Heart left ventricle (tissue), 16 donors: ENCODE measurements at regions of chr9 and their contacts with region 1.

Region 1: GRCh38 chr9:128593039-128593438 is 40.7 kb downstream of the SPTAN1 start:
- DNase-seq: no peak
- ATAC-seq: no peak
- H3K4me3 ChIP-seq: no peak overlapping the region
- H3K27ac ChIP-seq: no peak overlapping the region
- H3K4me1 ChIP-seq: no peaks in the 10 kb centered on the region
- H3K27me3 ChIP-seq: no peaks in the 10 kb centered on the region
- CTCF ChIP-seq: no peak
- POLR2A ChIP-seq: no peak

Region 2: DNA sequence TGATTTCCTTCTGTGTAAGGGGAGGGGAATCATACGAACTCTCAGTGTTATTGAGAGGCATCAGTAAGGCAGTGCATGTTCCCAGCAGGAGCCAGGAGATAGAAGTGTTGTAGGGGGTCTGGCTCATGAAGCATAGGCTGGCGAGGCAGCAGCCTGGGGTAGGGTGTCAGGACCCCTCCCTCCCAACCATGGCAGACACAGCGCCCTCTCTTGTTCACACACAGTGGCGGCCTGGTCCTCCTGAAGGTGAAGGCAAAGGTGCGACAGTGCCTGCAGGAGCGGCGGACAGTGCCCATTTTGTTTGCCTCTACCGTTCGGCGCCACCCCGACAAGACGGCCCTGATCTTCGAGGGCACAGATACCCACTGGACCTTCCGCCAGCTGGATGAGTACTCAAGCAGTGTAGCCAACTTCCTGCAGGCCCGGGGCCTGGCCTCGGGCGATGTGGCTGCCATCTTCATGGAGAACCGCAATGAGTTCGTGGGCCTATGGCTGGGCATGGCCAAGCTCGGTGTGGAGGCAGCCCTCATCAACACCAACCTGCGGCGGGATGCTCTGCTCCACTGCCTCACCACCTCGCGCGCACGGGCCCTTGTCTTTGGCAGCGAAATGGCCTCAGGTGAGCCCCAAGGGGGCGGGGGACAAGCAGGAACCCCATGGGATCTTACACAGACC is 248.0 kb before region 1 on chr9:
- intact Hi-C with region 1: no loop called
- DNase-seq: no peak
- ATAC-seq: no peak
- H3K4me3 ChIP-seq: no peak overlapping the region
- H3K27ac ChIP-seq: no peak overlapping the region
- H3K4me1 ChIP-seq: peaks cover 0 to 12% (median 9%) of the 10 kb centered on the region in 12 donors
- H3K27me3 ChIP-seq: no peaks in the 10 kb centered on the region
- CTCF ChIP-seq: no peak
- POLR2A ChIP-seq: no peak

Region 3: DNA sequence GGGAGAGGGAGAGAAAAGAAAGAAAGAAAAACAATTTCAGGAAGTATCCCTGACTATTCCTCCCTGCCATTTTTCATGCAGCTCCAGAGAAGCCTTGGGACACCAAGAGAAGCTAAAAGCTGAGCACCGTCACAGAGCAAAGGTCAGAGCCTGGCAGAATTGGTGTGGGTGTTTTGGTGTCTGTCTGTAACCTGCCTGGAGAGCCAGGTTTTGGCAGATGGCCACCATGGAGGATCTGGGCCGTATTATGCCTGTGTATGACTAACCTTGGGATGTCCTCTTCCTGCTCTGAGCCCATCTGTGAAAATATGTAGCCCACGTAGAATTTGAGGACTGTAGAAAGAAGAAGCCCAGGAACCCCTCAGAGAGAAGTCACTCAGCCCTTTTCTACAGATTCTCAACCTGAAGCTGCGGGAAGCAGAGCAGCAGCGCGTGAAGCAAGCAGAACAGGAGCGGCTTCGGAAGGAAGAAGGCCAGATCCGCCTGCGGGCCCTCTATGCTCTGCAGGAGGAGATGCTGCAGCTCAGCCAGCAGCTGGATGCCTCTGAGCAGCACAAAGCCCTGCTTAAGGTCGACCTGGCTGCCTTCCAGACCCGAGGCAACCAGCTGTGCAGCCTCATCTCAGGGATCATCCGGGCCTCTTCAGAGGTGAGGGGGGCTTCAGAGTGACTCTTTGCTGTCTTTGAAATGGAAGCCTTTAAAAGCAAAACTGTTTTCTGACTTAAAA is 69.7 kb before region 1 on chr9:
- intact Hi-C with region 1: loop called in 1 of 10 experiments (anchors 10 kb)
- DNase-seq: peak in 3 of 5 donors; percentile 22 to 57 (median 33)
- ATAC-seq: peak in 3 of 4 donors; percentile 45 to 53 (median 47)
- H3K4me3 ChIP-seq: no peak overlapping the region
- H3K27ac ChIP-seq: peak overlapping the region in 1 of 12 donors; percentile 14
- H3K4me1 ChIP-seq: peaks cover 0 to 9% (median 5%) of the 10 kb centered on the region in 12 donors
- H3K27me3 ChIP-seq: no peaks in the 10 kb centered on the region
- CTCF ChIP-seq: no peak
- POLR2A ChIP-seq: no peak

Region 4: GRCh38 chr9:128992995-128993394 is 400.0 kb after region 1 on chr9:
- intact Hi-C with region 1: no loop called
- DNase-seq: no peak
- ATAC-seq: no peak
- H3K4me3 ChIP-seq: no peak overlapping the region
- H3K27ac ChIP-seq: no peak overlapping the region
- H3K4me1 ChIP-seq: peaks cover 0 to 4% (median 0%) of the 10 kb centered on the region in 12 donors
- H3K27me3 ChIP-seq: no peaks in the 10 kb centered on the region
- CTCF ChIP-seq: peak in 3 of 12 donors; percentile 9 to 18 (median 15)
- POLR2A ChIP-seq: no peak